ENCODE measurements at regions of chr17 and their contacts with region 1.

Region 1: DNA sequence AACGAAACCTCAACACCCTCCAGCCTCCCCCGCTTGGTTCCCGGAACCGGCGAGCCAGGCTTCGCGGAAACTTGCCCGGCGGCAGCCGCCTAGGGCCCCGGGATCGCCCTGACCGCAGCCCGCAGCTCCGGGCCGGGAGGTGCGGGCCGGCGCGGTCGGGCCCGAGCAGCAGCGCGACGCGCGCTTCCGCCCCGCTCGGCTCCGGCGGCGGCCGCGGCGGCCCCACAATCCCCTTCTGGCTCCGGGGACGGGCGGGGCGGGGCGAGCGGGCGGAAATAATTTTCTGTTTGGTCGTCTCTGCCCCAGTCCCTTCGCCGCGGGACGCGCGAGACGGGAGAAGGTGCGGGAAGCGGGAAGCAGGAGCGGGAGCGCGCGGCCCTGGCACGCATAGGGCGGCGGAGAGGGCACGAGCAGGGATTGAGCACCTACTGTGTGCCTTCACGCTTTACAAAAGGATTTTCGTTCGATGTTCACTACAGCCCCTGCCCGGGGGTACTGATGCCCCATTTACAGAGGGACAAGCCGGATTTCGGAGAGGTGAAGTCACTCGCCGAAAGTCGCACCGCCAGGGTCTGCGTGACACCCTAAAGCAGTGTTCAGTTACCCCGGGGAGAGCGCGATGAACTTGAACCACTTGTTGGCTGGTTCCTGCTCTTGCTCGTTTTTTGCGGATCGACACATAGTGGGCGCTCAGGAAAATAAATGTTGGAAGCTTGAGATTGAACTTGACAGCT is 2.7 kb upstream of the MLLT6 start:
- DNase-seq: peak; percentile 75 to 83 (median 80)
- H3K4me3 ChIP-seq: peak overlapping the region; percentile 74 to 97
- H3K4me3 Mint-ChIP-seq: peak overlapping the region; percentile 92 to 99 (median 96)
- H3K27ac ChIP-seq: peak overlapping the region; percentile 94
- H3K27ac Mint-ChIP-seq: peak overlapping the region; percentile 92 to 98 (median 98)
- H3K4me1 ChIP-seq: peaks cover 40% of the 10 kb centered on the region
- H3K4me1 Mint-ChIP-seq: peaks cover 23 to 66% (median 34%) of the 10 kb centered on the region in 4 donors
- H3K27me3 ChIP-seq: no peaks in the 10 kb centered on the region
- H3K27me3 Mint-ChIP-seq: no peaks in the 10 kb centered on the region

Region 2: GRCh38 chr17:38674749-38675615 is 27.4 kb before region 1 on chr17 and contains the start of gene EPOP:
- CTCF ChIA-PET with region 1: interaction called, 9 read pairs
- POLR2A ChIA-PET with region 1: interaction called, 37 read pairs
- intact Hi-C with region 1: loop called (anchors 1 kb)
- DNase-seq: peak; percentile 68 to 82 (median 74)
- H3K4me3 ChIP-seq: peak within 1 kb of the TSS in 1 of 2 donors; percentile 52
- H3K4me3 Mint-ChIP-seq: peak within 1 kb of the TSS; percentile 39 to 82 (median 73)
- H3K27ac ChIP-seq: peak within 1 kb of the TSS; percentile 9
- H3K27ac Mint-ChIP-seq: peak within 1 kb of the TSS in 4 of 7 donors; percentile 31 to 47 (median 40)
- H3K4me1 ChIP-seq: peaks cover 11% of the 10 kb centered on the region
- H3K4me1 Mint-ChIP-seq: peaks cover 5 to 25% (median 11%) of the 10 kb centered on the region in 4 donors
- H3K27me3 ChIP-seq: peaks cover 12% of the 10 kb centered on the region
- H3K27me3 Mint-ChIP-seq: peaks cover 17 to 30% of the 10 kb centered on the region in 2 donors
- total RNA-seq, gene EPOP: 0.09 to 0.25 TPM

Region 3: DNA sequence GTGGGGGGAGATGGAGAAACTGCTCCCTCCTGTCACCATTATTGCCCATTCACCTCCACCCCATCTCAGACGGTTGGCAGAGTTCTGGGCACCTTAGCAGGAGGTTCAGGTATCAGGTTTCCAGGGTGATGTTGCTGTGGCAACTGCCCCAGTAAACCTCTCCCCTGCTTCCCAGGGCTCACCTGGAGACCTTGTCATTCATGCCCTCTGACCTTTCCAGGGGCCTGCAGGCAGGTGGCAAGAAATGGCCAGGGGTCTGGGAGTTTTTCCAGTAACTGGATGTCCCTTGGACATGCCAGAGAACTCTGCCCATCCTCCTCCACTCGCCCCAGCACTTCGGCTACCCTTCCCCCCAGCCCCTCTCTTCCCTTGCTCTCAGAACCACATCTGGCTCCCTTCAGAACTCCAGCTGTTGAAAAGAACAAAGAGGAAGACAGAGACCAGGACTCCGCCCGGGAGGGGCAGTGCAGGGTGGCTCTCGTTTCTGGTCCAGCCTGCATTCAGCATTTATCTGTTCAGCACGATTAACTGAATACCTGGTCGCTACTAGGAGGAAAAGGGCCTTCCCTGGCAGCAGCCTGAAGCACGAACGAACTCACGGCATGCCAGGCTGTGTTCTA is 11.2 kb after region 1 on chr17:
- CTCF ChIA-PET with region 1: no interaction called
- POLR2A ChIA-PET with region 1: interaction called, 588 read pairs
- intact Hi-C with region 1: no loop called
- DNase-seq: no peak
- H3K4me3 ChIP-seq: no peak overlapping the region
- H3K4me3 Mint-ChIP-seq: no peak overlapping the region
- H3K27ac ChIP-seq: no peak overlapping the region
- H3K27ac Mint-ChIP-seq: peak overlapping the region in 3 of 7 donors; percentile 8 to 78 (median 42)
- H3K4me1 ChIP-seq: peaks cover 21% of the 10 kb centered on the region
- H3K4me1 Mint-ChIP-seq: peaks cover 7 to 56% (median 17%) of the 10 kb centered on the region in 4 donors
- H3K27me3 ChIP-seq: no peaks in the 10 kb centered on the region
- H3K27me3 Mint-ChIP-seq: no peaks in the 10 kb centered on the region

Region 4: GRCh38 chr17:38729886-38730525 is 27.7 kb after region 1 on chr17 and contains the start of gene CISD3:
- CTCF ChIA-PET with region 1: interaction called, 34 read pairs
- POLR2A ChIA-PET with region 1: interaction called, 588 read pairs
- intact Hi-C with region 1: loop called (anchors 1 kb)
- DNase-seq: peak; percentile 82 to 89 (median 87)
- H3K4me3 ChIP-seq: peak within 1 kb of the TSS; percentile 67 to 83
- H3K4me3 Mint-ChIP-seq: peak within 1 kb of the TSS; percentile 92 to 99 (median 97)
- H3K27ac ChIP-seq: peak within 1 kb of the TSS; percentile 72
- H3K27ac Mint-ChIP-seq: peak within 1 kb of the TSS; percentile 94 to 99 (median 97)
- H3K4me1 ChIP-seq: peaks cover 87% of the 10 kb centered on the region
- H3K4me1 Mint-ChIP-seq: peaks cover 45 to 93% (median 71%) of the 10 kb centered on the region in 4 donors
- H3K27me3 ChIP-seq: no peaks in the 10 kb centered on the region
- H3K27me3 Mint-ChIP-seq: no peaks in the 10 kb centered on the region
- total RNA-seq, gene CISD3: 12.5 to 13.5 TPM

Region 5: GRCh38 chr17:38752119-38752929 is 50.0 kb after region 1 on chr17 and contains the start of gene PSMB3:
- CTCF ChIA-PET with region 1: interaction called, 4 read pairs
- POLR2A ChIA-PET with region 1: interaction called, 50 read pairs
- intact Hi-C with region 1: loop called (anchors 1 kb)
- DNase-seq: peak; percentile 95 to 99 (median 97)
- H3K4me3 ChIP-seq: peak within 1 kb of the TSS; percentile 81 to 94
- H3K4me3 Mint-ChIP-seq: peak within 1 kb of the TSS; percentile 95 to 100 (median 99)
- H3K27ac ChIP-seq: peak within 1 kb of the TSS; percentile 84
- H3K27ac Mint-ChIP-seq: peak within 1 kb of the TSS; percentile 93 to 100 (median 98)
- H3K4me1 ChIP-seq: peaks cover 57% of the 10 kb centered on the region
- H3K4me1 Mint-ChIP-seq: peaks cover 25 to 57% (median 43%) of the 10 kb centered on the region in 4 donors
- H3K27me3 ChIP-seq: peaks cover 24% of the 10 kb centered on the region
- H3K27me3 Mint-ChIP-seq: peaks cover 7 to 16% of the 10 kb centered on the region in 2 donors
- total RNA-seq, gene PSMB3: 93.5 to 99.0 TPM

Region 6: GRCh38 chr17:38799378-38800236 is 97.3 kb after region 1 on chr17 and contains the start of gene PIP4K2B:
- CTCF ChIA-PET with region 1: no interaction called
- POLR2A ChIA-PET with region 1: interaction called, 4 read pairs
- intact Hi-C with region 1: loop called (anchors 1 kb)
- DNase-seq: peak; percentile 81 to 88 (median 83)
- H3K4me3 ChIP-seq: peak within 1 kb of the TSS; percentile 76 to 84
- H3K4me3 Mint-ChIP-seq: peak within 1 kb of the TSS; percentile 91 to 98 (median 94)
- H3K27ac ChIP-seq: peak within 1 kb of the TSS; percentile 76
- H3K27ac Mint-ChIP-seq: peak within 1 kb of the TSS; percentile 89 to 96 (median 93)
- H3K4me1 ChIP-seq: peaks cover 27% of the 10 kb centered on the region
- H3K4me1 Mint-ChIP-seq: peaks cover 30 to 46% (median 36%) of the 10 kb centered on the region in 4 donors
- H3K27me3 ChIP-seq: no peaks in the 10 kb centered on the region
- H3K27me3 Mint-ChIP-seq: no peaks in the 10 kb centered on the region
- total RNA-seq, gene PIP4K2B: 55.9 to 66.3 TPM

Region 7: DNA sequence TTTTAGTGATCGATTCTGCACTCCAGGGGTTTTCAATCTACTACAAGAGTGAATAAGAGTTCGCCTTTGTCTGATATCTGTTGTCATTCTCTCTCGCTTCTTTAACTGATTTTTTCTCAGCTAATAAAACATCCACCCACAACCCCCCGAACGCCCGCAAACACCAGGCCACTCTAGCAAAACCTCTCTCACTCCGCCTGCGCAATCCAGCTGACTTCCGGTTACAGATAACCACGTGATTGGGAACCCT is 497.4 kb after region 1 on chr17:
- CTCF ChIA-PET with region 1: no interaction called
- POLR2A ChIA-PET with region 1: interaction called, 4 read pairs
- intact Hi-C with region 1: loop called (anchors 10 kb)
- DNase-seq: peak in 4 of 5 donors; percentile 92 to 94 (median 92)
- H3K4me3 ChIP-seq: peak overlapping the region; percentile 77 to 93
- H3K4me3 Mint-ChIP-seq: peak overlapping the region; percentile 86 to 98 (median 96)
- H3K27ac ChIP-seq: peak overlapping the region; percentile 98
- H3K27ac Mint-ChIP-seq: peak overlapping the region; percentile 96 to 100 (median 100)
- H3K4me1 ChIP-seq: peaks cover 58% of the 10 kb centered on the region
- H3K4me1 Mint-ChIP-seq: peaks cover 37 to 73% (median 58%) of the 10 kb centered on the region in 4 donors
- H3K27me3 ChIP-seq: no peaks in the 10 kb centered on the region
- H3K27me3 Mint-ChIP-seq: no peaks in the 10 kb centered on the region